HepG2 (cell line): ENCODE measurements at regions of chr14 and their contacts with region 1.

Region 1: DNA sequence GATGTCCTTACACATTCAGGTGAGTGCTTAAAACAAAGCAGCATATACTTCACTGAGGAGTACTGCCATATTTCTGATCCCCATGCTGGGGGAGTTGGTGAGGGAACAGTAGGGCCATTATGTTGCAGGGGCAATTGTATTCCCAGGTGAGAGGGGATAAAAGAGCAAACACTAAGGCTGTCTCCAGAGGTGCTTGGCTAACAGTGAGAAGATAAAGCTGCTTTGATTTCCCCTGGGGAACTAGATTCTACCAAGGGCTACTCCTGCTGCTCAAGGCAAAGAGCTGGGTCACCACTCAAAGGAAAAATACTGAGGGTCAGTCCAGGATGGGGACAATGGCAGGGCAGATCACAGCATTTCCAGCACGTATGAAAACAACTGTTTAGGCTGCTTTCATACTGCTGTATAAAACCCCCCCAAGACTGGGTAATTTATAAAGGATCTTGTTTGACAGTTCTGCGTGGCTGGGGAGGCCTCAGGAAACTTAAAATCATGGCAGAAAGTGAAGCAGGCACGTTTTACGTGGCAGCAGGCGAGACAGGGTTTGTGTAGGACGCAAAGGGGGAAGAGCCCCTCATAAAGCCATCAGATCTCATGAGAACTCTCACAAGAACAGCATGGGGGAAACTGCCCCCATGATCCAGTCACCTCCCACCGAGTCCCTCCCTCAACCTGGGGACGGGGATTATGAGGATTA is 47.8 kb upstream of the OR5AU1 start:
- DNase-seq: peak; percentile 79
- ATAC-seq: peak; percentile 40
- H3K4me3 ChIP-seq: no peak overlapping the region
- H3K27ac ChIP-seq: peak overlapping the region; percentile 1
- H3K4me1 ChIP-seq: peaks cover 70% of the 10 kb centered on the region
- H3K27me3 ChIP-seq: no peaks in the 10 kb centered on the region
- CTCF ChIP-seq: no peak
- EP300 ChIP-seq: no peak; a peak in 1 of 4 replicates
- POLR2A ChIP-seq: peak in 1 of 2 experiments; percentile 51; a peak in 3 of 4 replicates
- RAD21 ChIP-seq: no peak

Region 2: DNA sequence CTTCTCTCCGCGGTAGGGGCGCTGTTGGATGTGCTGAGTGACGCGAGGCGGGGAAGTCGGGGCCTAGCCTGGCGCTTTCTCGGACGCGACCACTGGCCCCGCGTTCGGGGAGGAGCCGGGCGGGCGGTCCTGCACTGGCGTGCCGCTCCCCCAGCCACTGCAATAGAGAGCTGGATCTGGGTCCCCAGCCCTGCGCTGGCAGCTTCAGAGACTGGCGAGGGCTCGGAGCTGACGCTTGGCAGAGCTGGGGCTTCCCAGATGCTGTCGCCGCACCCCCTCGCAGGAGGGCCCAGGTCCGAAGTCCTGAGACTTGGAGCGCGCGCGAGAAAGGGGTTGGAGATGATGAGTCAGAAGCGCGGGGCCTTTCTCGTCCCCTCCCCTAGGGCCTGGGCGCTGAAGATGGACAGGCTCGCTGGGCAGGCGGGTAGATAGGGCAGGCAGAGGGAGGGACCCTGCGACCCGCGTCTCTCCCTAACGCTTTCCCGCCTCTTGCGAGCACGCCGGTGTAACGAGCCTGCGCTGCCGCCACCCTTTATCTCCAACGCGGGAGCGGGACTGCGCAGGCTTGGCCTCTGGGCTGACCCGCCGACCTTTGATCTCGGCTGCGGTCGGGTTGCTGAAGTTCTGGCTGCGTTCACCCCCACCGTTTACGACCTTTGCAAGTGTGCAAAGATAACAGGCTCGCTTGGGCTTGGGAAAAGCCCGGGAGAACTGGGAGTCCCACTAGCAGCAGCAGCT is 99.7 kb before region 1 on chr14:
- CTCF ChIA-PET with region 1: no interaction called
- POLR2A ChIA-PET with region 1: no interaction called
- in situ Hi-C with region 1: no loop called
- intact Hi-C with region 1: no loop called
- DNase-seq: peak; percentile 98
- ATAC-seq: peak; percentile 83
- H3K4me3 ChIP-seq: peak overlapping the region; percentile 61 to 82 (median 66)
- H3K27ac ChIP-seq: peak overlapping the region; percentile 97
- H3K4me1 ChIP-seq: peaks cover 80% of the 10 kb centered on the region
- H3K27me3 ChIP-seq: no peaks in the 10 kb centered on the region; a peak in 1 of 5 replicates
- CTCF ChIP-seq: peak; percentile 95
- EP300 ChIP-seq: peak in 1 of 2 experiments; percentile 76; a peak in 2 of 4 replicates
- POLR2A ChIP-seq: peak in 1 of 2 experiments; percentile 95; a peak in 2 of 4 replicates
- RAD21 ChIP-seq: peak; percentile 74

Region 3: GRCh38 chr14:21163871-21164291 is 39.7 kb before region 1 on chr14:
- CTCF ChIA-PET with region 1: no interaction called
- POLR2A ChIA-PET with region 1: no interaction called
- in situ Hi-C with region 1: no loop called
- intact Hi-C with region 1: no loop called
- DNase-seq: no peak
- ATAC-seq: no peak
- H3K4me3 ChIP-seq: no peak overlapping the region
- H3K27ac ChIP-seq: no peak overlapping the region
- H3K4me1 ChIP-seq: no peaks in the 10 kb centered on the region
- H3K27me3 ChIP-seq: peaks cover 3 to 34% of the 10 kb centered on the region in 2 experiments; a peak in 4 of 5 replicates
- CTCF ChIP-seq: no peak
- EP300 ChIP-seq: no peak
- POLR2A ChIP-seq: no peak
- RAD21 ChIP-seq: no peak

Region 4: GRCh38 chr14:21191809-21192446 is 11.7 kb before region 1 on chr14:
- CTCF ChIA-PET with region 1: no interaction called
- POLR2A ChIA-PET with region 1: interaction called, 11 read pairs
- in situ Hi-C with region 1: no loop called
- intact Hi-C with region 1: no loop called
- DNase-seq: peak; percentile 77
- ATAC-seq: peak; percentile 90
- H3K4me3 ChIP-seq: peak overlapping the region; percentile 53 to 78 (median 58)
- H3K27ac ChIP-seq: no peak overlapping the region
- H3K4me1 ChIP-seq: peaks cover 22% of the 10 kb centered on the region
- H3K27me3 ChIP-seq: no peaks in the 10 kb centered on the region; a peak in 1 of 5 replicates
- CTCF ChIP-seq: no peak
- EP300 ChIP-seq: no peak
- POLR2A ChIP-seq: 0 out of 4 replicates have a peak, but pooled peaks of 1 of the 2 experiments have one; percentile 30
- RAD21 ChIP-seq: no peak